ENCODE measurements at regions of chr1 and their contacts with region 1.

Region 1: DNA sequence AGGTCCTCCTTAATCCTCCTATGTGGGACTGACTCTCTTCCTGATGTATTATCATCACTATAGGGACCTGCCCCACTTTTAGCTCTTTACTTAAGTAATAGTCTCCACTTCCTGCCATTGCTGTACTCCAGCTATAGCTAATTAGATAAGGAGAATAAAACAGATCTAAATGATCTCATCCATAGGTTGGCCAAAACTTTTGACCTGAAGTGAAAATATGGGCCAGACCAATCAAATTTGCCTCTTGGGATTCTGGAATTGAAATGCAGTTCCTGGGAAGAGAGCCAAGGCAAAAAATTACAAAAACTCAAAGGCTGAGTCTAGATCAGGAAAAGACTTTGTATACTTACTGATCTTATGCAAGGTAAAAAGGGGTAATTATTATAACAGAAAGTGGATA is 36.1 kb upstream of the PDE4B start:
- DNase-seq: no peak
- H3K4me3 Mint-ChIP-seq: no peak overlapping the region
- H3K27ac Mint-ChIP-seq: no peak overlapping the region
- H3K4me1 Mint-ChIP-seq: no peaks in the 10 kb centered on the region
- H3K27me3 Mint-ChIP-seq: no peaks in the 10 kb centered on the region
- CTCF ChIP-seq: no peak

Region 2: GRCh38 chr1:65741993-65742392 is 14.6 kb before region 1 on chr1:
- CTCF ChIA-PET with region 1: no interaction called
- intact Hi-C with region 1: loop called (anchors 1 kb)
- DNase-seq: no peak
- H3K4me3 Mint-ChIP-seq: no peak overlapping the region
- H3K27ac Mint-ChIP-seq: no peak overlapping the region
- H3K4me1 Mint-ChIP-seq: peaks cover 4% of the 10 kb centered on the region
- H3K27me3 Mint-ChIP-seq: peaks cover 17% of the 10 kb centered on the region
- CTCF ChIP-seq: no peak

Region 3: DNA sequence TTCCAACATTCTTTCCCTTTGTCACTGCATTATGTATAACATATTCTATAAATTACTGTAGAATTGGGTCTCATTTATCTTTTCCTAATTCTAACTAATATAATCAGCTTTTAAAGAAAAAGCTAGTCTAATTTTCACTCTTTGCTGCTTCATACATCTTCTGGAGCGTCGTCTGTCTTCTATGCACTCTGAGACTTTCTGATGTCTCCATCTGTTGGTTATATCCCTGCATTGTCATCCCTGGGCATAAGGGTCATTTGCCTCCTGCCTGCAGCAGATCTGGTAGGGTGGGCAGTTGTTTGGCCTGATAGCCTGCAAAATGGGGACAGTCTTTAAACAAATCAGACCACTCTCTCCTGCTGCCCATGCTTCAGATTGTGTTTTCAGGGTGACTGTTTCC is 954.8 kb after region 1 on chr1:
- CTCF ChIA-PET with region 1: no interaction called
- intact Hi-C with region 1: no loop called
- DNase-seq: no peak
- H3K4me3 Mint-ChIP-seq: no peak overlapping the region
- H3K27ac Mint-ChIP-seq: no peak overlapping the region
- H3K4me1 Mint-ChIP-seq: no peaks in the 10 kb centered on the region
- H3K27me3 Mint-ChIP-seq: no peaks in the 10 kb centered on the region
- CTCF ChIP-seq: no peak

Measured in Calu3 (cell line).